GM12878 (cell line): ENCODE measurements at regions of chr7 and their contacts with region 1.

Region 1: DNA sequence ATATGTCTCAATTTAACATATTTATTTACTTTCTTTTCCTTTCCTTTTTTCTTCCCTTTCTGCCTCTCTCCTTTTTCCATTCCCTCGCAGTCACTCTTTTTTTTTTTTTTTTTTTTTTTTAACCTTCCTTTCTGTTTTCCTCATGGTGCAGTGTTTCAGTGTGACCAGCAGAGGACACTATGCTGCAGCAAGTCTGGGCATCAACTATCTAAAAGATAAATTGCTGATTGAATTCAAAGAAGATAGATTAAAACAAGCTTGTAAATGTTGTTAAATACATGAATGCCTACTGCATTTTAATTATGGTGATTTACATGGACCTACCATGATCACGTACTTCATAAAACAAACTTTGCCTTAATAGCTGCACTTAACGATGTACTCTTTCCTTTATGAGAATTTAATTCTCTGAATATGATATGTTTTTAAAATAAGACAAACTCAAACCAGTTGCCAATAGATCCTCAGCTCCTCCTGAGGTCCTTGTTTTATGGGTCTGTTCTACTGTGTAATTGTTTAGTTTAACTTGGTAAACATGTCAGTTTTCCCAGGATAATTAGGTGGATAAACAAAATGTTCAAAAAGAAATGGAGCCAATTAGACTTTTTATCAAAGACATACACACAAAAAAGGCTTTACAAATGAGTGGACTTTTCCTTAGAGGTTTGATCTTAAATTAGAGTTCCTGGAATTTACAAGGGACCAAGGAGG is 101.0 kb upstream of the AGR3 start:
- DNase-seq: no peak
- ATAC-seq: peak; percentile 46; the same call in 2 of the 3 replicates
- H3K4me3 ChIP-seq: no peak overlapping the region
- H3K27ac ChIP-seq: no peak overlapping the region
- H3K4me1 ChIP-seq: no peaks in the 10 kb centered on the region
- H3K27me3 ChIP-seq: no peaks in the 10 kb centered on the region
- CTCF ChIP-seq: peak; percentile 84 to 93 (median 93)
- EP300 ChIP-seq: no peak
- POLR2A ChIP-seq: no peak
- RAD21 ChIP-seq: peak; percentile 99

Region 2: GRCh38 chr7:17063045-17063383 is 80.2 kb after region 1 on chr7:
- CTCF ChIA-PET with region 1: interaction called, 16 read pairs
- POLR2A ChIA-PET with region 1: no interaction called
- RAD21 ChIA-PET with region 1: interaction called, 10 read pairs
- SMC1A ChIA-PET with region 1: interaction called, 10 read pairs
- in situ Hi-C with region 1: no loop called
- intact Hi-C with region 1: no loop called
- DNase-seq: no peak
- ATAC-seq: peak; percentile 65
- H3K4me3 ChIP-seq: no peak overlapping the region
- H3K27ac ChIP-seq: no peak overlapping the region
- H3K4me1 ChIP-seq: no peaks in the 10 kb centered on the region
- H3K27me3 ChIP-seq: no peaks in the 10 kb centered on the region
- CTCF ChIP-seq: peak in 2 of 3 experiments; percentile 4 to 8; a peak in 2 of 6 replicates
- EP300 ChIP-seq: no peak
- POLR2A ChIP-seq: no peak
- RAD21 ChIP-seq: peak; percentile 31; the same call in 1 of the 2 replicates

Region 3: GRCh38 chr7:17185690-17186070 is 202.9 kb after region 1 on chr7:
- CTCF ChIA-PET with region 1: interaction called, 6 read pairs
- POLR2A ChIA-PET with region 1: no interaction called
- RAD21 ChIA-PET with region 1: interaction called, 4 read pairs
- SMC1A ChIA-PET with region 1: no interaction called
- in situ Hi-C with region 1: no loop called
- intact Hi-C with region 1: loop called (anchors 1 kb)
- DNase-seq: peak; percentile 59
- ATAC-seq: peak; percentile 99
- H3K4me3 ChIP-seq: no peak overlapping the region
- H3K27ac ChIP-seq: 0 out of 2 replicates have a peak overlapping the region, but pooled peaks have one; percentile 4
- H3K4me1 ChIP-seq: peaks cover 4% of the 10 kb centered on the region
- H3K27me3 ChIP-seq: no peaks in the 10 kb centered on the region
- CTCF ChIP-seq: no peak
- EP300 ChIP-seq: peak in 1 of 2 experiments; percentile 92; a peak in 3 of 4 replicates
- POLR2A ChIP-seq: no peak
- RAD21 ChIP-seq: peak; percentile 19; the same call in 1 of the 2 replicates

Region 4: DNA sequence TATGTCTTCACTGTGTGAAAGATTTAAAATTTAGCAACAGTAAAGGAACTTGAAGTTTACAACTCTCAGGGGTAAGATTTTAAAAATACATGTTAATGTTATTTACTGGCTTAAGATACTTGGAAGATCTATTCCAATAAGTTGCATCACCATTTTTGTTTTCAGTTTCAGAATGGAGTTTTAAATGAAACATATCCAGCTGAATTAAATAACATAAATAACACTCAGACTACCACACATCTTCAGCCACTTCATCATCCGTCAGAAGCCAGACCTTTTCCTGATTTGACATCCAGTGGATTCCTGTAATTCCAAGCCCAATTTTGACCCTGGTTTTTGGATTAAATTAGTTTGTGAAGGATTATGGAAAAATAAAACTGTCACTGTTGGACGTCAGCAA is 360.0 kb after region 1 on chr7:
- CTCF ChIA-PET with region 1: no interaction called
- POLR2A ChIA-PET with region 1: no interaction called
- RAD21 ChIA-PET with region 1: no interaction called
- SMC1A ChIA-PET with region 1: no interaction called
- in situ Hi-C with region 1: no loop called
- intact Hi-C with region 1: no loop called
- DNase-seq: no peak
- ATAC-seq: no peak
- H3K4me3 ChIP-seq: no peak overlapping the region
- H3K27ac ChIP-seq: no peak overlapping the region
- H3K4me1 ChIP-seq: no peaks in the 10 kb centered on the region
- H3K27me3 ChIP-seq: no peaks in the 10 kb centered on the region
- CTCF ChIP-seq: no peak
- EP300 ChIP-seq: no peak
- POLR2A ChIP-seq: no peak
- RAD21 ChIP-seq: no peak

Region 5: GRCh38 chr7:17530741-17531417 is 548.1 kb after region 1 on chr7:
- CTCF ChIA-PET with region 1: interaction called, 25 read pairs
- POLR2A ChIA-PET with region 1: no interaction called
- RAD21 ChIA-PET with region 1: no interaction called
- SMC1A ChIA-PET with region 1: interaction called, 6 read pairs
- in situ Hi-C with region 1: loop called (anchors 10 kb)
- intact Hi-C with region 1: loop called (anchors 2 kb)
- DNase-seq: peak; percentile 19
- ATAC-seq: peak; percentile 93
- H3K4me3 ChIP-seq: no peak overlapping the region
- H3K27ac ChIP-seq: no peak overlapping the region
- H3K4me1 ChIP-seq: no peaks in the 10 kb centered on the region
- H3K27me3 ChIP-seq: no peaks in the 10 kb centered on the region; a peak in 1 of 4 replicates
- CTCF ChIP-seq: peak; percentile 14 to 57 (median 29); a peak in 3 of 6 replicates
- EP300 ChIP-seq: no peak
- POLR2A ChIP-seq: no peak
- RAD21 ChIP-seq: peak; percentile 79

Region 6: DNA sequence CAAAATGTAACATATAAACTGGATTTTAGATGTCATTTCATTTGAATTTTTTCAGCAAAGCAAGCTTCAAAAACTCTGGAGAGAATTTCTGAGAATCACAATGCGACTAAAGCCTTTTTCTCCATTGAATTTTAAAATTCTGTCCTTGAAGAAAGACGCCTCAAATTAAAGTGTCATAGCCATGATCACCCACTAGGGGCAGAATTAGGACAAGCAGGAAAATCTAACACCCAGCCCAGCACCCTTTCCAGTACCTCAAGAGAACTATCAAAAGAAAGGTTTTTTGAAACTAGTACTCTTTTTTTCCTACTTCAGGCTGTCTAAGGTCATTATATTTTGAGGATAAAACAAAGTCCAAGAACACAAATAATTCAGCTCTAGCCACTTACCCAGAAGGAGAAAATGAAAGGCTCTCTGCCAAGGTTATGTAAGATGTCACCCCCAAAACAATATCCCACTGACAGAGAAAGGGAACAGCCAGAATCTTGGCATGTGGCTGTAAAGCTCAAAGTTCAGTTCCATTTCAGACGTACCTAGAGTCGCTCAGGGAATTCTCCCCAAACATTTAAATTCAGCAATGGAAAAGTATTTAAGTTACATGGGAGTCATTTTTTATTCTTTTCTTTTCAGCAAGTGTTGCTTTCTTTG is 658.1 kb after region 1 on chr7:
- CTCF ChIA-PET with region 1: no interaction called
- POLR2A ChIA-PET with region 1: no interaction called
- RAD21 ChIA-PET with region 1: no interaction called
- SMC1A ChIA-PET with region 1: interaction called, 4 read pairs
- in situ Hi-C with region 1: loop called (anchors 10 kb)
- intact Hi-C with region 1: loop called (anchors 1 kb)
- DNase-seq: no peak
- ATAC-seq: peak; percentile 63
- H3K4me3 ChIP-seq: no peak overlapping the region
- H3K27ac ChIP-seq: no peak overlapping the region
- H3K4me1 ChIP-seq: no peaks in the 10 kb centered on the region
- H3K27me3 ChIP-seq: no peaks in the 10 kb centered on the region; a peak in 2 of 4 replicates
- CTCF ChIP-seq: peak; percentile 50 to 65 (median 62)
- EP300 ChIP-seq: no peak
- POLR2A ChIP-seq: no peak
- RAD21 ChIP-seq: peak; percentile 27; the same call in 1 of the 2 replicates